Posterior vena cava (tissue), 2 donors: ENCODE measurements at regions of chr2 and their contacts with region 1.

Region 1: DNA sequence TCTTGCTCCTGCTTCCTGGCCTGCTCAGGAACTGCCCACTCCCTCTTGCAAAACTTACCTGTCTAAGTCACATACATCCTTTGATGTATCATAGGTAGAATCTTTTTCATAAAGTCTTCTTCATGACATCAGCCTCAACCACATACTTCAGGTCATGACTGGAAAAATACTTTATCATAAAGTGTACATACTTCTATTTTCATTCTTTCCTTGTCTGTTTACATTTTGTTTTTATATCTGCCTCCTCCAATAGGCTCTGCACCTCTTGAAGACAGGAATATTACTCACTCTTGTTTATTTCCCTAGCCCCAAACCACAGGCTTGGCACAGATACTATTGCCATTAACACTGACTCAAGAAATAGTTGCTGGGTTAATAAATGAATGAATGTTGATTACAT is 43.6 kb upstream of the ZNF804A start:
- DNase-seq: no peak

Region 2: DNA sequence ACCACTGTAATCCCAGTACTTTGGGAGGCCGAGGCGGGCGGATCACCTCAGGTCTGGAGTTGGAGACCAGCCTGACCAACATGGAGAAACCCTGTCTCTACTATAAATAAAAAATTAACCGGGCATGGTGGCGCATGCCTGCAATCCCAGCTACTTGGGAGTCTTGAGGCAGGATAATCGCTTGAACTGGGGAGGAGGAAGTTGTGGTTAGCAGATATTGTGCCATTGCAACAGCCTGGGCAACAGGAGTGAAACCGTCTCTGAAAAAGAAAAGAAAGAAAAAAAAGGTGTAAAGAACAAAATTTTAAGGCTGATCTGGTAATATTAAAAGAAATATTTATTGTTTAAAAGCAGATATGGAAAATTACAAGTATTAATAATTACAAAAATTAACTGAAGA is 73.3 kb after region 1 on chr2:
- intact Hi-C with region 1: no loop called
- DNase-seq: no peak

Region 3: DNA sequence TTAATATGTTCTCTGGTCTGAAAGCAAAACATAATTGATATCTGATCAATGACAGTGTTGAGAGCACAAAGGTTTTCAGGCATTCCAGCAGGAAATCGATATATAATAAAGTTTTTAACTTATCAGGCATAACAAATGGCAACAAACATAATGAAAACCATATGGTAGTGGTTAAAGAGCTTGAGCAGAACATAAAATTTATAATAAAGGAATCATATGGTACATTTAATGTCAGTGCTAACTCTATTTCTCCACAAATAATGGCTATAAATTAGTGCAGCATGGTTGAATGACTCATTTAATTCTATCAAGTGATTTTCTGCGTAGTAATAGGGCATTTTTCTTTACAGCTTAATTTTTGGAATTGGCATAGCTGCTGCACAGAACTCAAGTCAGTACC is 1490.0 kb after region 1 on chr2:
- intact Hi-C with region 1: loop called in 1 of 2 experiments (anchors 5 kb)
- DNase-seq: no peak